Gastrocnemius medialis (tissue), 4 donors: ENCODE measurements at regions of chr2 and their contacts with region 1.

Region 1: DNA sequence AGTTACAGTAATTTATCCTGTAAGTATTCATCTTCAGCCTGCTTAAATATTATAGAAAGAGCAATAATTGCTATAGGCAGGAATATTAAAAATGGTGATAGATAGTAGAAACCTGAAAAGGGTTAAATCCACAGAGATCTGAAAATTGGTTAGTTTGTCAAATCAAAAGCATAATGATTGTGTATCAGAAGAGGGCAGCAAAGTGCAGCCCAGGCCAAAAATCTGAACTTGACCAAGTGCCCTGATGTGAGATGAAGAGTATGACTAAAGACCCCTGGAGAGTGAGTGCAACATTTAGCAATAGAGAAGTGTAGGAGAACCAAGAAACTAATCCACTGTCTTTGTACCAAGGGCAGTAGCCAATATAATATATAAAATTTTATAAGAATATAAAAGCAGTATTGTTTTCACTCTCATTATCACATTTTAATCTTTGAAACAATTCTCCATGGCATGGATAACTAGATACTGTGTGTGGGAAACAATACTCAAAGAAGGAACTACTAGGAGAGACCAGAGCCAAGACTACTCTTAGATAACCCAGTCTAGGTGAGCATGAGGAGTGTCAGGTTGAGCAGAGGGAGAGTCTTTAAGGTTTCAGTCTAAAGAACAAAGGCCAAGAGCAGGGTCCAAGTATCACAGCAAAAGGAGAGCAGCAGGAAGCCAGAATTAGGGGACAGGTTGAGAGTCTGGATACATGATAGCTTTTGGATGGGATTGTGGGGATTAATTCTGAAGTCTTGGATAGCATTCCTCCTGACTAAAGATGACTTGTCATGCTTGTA is 148.7 kb downstream of the CALCRL start:
- DNase-seq: no peak
- ATAC-seq: no peak
- H3K4me3 ChIP-seq: no peak overlapping the region
- H3K27ac ChIP-seq: peak overlapping the region in 1 of 4 donors; percentile 23
- H3K4me1 ChIP-seq: no peaks in the 10 kb centered on the region
- H3K27me3 ChIP-seq: no peaks in the 10 kb centered on the region
- CTCF ChIP-seq: peak in 2 of 5 experiments; percentile 26 to 30
- POLR2A ChIP-seq: no peak

Region 2: DNA sequence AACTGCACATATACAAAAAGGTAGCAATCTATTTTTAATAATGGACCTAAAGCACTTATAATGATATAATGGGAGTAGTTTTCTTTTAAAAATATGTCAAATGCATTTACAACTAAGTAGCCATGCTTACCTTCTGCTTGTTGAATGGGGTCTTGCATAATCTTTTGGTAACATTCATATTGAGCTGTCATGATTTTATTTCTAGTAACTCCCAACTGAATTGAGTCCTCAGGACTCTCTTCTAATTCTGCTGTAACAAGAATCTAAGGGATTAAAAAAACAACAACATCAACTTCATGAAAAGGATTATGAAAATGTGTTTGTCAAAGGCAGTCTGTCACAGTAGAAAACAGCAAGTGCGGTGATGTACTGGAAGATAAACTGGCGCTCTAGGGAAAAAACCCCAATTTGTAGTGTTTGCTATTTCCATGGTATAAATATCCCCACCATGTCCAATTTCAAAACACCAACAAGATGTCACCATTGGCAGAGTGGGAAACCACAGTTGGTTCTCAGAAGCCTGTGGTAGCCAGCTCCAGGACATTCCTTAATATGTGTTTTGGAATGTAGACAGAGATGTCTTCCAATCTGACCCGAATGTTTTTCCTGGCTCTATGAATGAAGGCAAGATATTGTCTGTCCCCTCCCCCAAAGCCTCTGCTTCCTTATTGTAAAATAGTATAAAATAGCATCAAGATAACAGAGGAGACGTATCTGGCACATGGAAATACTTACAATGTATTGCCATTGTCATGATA is 83.9 kb after region 1 on chr2:
- in situ Hi-C with region 1: no loop called
- intact Hi-C with region 1: no loop called
- DNase-seq: no peak
- ATAC-seq: no peak
- H3K4me3 ChIP-seq: no peak overlapping the region
- H3K27ac ChIP-seq: no peak overlapping the region
- H3K4me1 ChIP-seq: no peaks in the 10 kb centered on the region
- H3K27me3 ChIP-seq: no peaks in the 10 kb centered on the region
- CTCF ChIP-seq: no peak
- POLR2A ChIP-seq: no peak

Region 3: DNA sequence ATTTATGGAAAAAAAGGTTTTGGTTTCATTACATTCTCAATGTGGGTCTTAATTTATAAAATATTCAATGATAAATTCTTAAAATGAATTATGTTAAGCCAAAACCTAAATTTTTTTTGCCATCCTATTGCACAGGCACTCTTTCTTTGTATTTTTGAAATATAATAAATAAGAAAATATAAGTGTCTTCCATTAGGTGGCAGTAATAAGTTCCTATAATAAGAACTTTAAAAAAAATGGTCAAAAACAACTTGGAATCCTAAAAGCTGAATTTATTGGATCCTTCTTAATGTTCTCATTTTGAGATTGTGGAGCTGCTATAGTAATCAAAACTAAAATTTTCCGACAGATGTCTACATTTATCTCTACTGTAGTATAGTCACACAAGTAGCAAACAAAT is 143.1 kb after region 1 on chr2:
- in situ Hi-C with region 1: loop called in 2 of 4 experiments (anchors 5 to 10 kb)
- intact Hi-C with region 1: no loop called
- DNase-seq: no peak
- ATAC-seq: no peak
- H3K4me3 ChIP-seq: no peak overlapping the region
- H3K27ac ChIP-seq: no peak overlapping the region
- H3K4me1 ChIP-seq: no peaks in the 10 kb centered on the region
- H3K27me3 ChIP-seq: no peaks in the 10 kb centered on the region
- CTCF ChIP-seq: no peak
- POLR2A ChIP-seq: no peak

Region 4: DNA sequence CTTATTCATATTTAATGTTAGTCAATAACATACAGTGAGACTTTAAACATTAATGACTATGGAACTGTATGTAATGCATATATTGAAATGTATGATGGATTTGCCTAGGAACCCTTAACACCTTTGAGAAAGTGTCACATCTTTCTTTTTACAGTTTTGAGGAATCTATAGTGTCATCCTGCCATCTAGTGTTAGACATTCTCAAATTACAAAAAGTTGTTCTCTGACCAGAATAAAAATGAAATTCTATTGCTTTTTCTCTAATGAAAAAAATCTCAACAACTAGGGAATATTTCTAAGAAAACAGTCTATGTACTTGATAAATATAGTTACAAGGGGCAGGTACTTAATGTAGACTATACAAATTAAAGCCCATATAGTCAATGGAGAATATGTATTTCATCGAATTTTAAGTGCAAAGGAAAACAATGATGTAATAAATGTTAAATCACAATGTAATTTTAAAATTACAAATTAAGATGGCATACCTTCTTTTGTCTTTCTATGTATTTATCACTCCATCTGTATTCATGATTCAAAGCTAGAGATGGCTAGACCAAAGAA is 153.8 kb after region 1 on chr2:
- in situ Hi-C with region 1: loop called in 2 of 4 experiments (anchors 5 to 10 kb)
- intact Hi-C with region 1: loop called (anchors 10 kb)
- DNase-seq: no peak
- ATAC-seq: no peak
- H3K4me3 ChIP-seq: no peak overlapping the region
- H3K27ac ChIP-seq: no peak overlapping the region
- H3K4me1 ChIP-seq: no peaks in the 10 kb centered on the region
- H3K27me3 ChIP-seq: no peaks in the 10 kb centered on the region
- CTCF ChIP-seq: peak in 4 of 5 experiments; percentile 16 to 46 (median 30)
- POLR2A ChIP-seq: no peak